Sigmoid colon (tissue), 7 donors: ENCODE measurements at regions of chr3 and their contacts with region 1.

Region 1: GRCh38 chr3:167684388-167684993 is 30.7 kb upstream of the WDR49 start:
- DNase-seq: no peak
- H3K4me3 ChIP-seq: no peak overlapping the region
- H3K27ac ChIP-seq: no peak overlapping the region
- H3K4me1 ChIP-seq: no peaks in the 10 kb centered on the region
- H3K27me3 ChIP-seq: no peaks in the 10 kb centered on the region
- CTCF ChIP-seq: peak in 3 of 4 experiments; percentile 28 to 70 (median 42)
- EP300 ChIP-seq: no peak
- POLR2A ChIP-seq: no peak

Region 2: DNA sequence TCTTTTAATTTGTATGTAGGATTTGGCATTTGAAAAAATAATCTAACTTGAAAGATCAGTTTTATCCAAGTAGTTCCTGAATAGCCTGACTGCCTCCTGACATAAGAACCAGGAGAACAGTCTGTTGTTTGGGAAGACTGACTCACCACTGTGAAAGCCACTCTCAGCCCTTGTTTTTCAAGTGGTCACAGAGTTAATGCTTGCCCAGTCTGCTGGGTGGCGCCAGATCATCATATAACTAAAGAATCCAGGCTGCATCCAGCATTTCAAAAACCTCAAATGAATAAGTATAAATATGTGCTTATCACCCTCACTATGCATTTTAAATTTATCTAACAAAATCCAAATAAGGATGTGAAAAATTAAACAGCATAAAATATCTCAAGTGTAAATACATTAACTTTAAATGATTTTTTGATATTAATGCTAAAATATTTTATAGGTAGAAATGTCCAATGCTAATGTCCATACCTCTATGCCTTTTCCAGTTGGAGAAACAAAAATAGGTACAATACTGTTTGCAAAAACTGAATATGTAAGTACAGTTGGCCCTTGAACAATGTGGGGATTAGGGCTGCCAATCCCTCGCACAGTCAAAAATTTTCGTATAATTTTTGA is 277.5 kb before region 1 on chr3:
- intact Hi-C with region 1: loop called (anchors 10 kb)
- DNase-seq: no peak
- H3K4me3 ChIP-seq: no peak overlapping the region
- H3K27ac ChIP-seq: no peak overlapping the region
- H3K4me1 ChIP-seq: no peaks in the 10 kb centered on the region
- H3K27me3 ChIP-seq: no peaks in the 10 kb centered on the region
- CTCF ChIP-seq: no peak
- EP300 ChIP-seq: no peak
- POLR2A ChIP-seq: no peak

Region 3: DNA sequence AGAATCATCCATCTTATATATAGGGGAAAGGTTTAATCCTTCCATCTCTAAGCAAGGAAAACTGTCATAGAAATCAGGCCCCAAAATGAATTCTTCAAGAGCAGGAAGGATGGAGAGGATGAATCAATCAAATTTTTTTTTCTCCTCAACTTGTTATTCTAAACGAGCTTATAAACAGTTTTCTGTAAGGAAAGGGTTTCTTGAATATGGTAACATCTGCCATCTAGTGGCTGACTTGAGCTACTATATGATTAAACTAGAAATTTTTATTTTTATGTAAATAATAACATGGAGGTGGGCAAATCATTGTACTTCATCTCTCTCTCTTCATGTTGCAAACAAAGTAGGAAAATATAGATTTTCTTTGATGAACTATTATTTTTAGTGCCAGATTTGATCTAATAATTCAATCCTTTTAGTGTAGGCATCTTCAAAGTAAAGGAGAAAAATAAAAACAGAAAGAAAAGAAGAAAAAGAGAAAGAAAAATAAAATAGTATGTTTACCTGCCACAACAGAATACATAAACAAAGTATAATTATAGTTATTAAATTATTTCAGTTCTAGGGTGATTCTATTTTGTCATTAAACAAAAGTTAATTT is 197.7 kb after region 1 on chr3:
- intact Hi-C with region 1: no loop called
- DNase-seq: no peak
- H3K4me3 ChIP-seq: no peak overlapping the region
- H3K27ac ChIP-seq: no peak overlapping the region
- H3K4me1 ChIP-seq: peaks cover 0 to 7% (median under 1%) of the 10 kb centered on the region in 4 donors
- H3K27me3 ChIP-seq: no peaks in the 10 kb centered on the region
- CTCF ChIP-seq: peak; percentile 12 to 56 (median 42)
- EP300 ChIP-seq: no peak
- POLR2A ChIP-seq: no peak